ENCODE measurements at regions of chr12 and their contacts with region 1.

Region 1: DNA sequence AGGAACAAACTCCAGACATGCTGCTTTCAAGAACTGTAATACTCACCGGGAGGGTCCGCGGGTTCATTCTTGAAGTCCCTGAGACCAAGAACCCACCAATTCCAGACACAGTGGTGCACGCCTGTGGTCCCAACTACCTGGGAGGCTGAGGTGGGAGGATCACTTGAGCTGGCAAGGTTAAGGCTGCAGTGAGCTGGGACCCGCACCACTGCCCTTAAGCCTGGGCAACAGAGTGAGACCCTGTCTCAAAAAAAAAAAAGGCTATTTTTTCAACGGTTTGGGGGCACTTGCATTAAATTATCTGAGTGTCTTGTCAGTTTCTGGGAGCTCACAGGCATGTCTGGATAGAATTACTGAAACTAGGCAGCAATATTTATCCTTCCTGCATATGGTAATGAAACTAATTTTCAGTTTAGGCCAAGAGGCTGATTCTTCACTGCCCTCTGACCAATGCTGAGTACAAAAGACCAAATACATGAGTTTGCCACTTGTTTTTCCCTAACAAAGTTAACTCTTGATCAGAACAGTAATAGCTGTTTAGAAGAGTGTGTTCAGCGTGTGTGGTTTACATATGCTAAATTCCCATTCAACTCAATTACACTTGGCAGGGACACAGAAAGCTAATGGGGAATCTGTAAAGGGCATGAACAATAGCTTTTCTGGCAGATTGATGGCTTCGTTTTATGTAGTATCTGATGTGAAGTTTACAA is 65.8 kb upstream of the RASSF3 start:
- DNase-seq: no peak
- H3K4me3 ChIP-seq: no peak overlapping the region
- CTCF ChIP-seq: no peak

Region 2: DNA sequence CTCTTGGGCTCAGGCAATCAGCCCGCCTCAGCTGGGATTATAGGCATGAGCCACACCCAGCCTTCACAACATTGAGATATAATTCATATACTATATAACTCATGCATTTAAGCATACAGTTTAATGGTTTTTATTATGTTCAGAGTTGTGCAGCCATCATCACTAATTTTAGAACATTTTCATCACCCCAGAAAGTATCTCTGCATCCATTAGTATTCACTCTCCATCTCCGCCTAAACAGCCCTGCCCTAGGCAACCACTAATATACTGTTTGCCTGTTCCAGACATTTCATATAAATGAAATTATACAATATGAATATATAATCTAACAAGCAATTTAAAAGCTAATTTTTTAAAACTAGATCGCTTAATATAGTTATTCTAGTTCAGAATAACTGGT is 57.9 kb before region 1 on chr12:
- in situ Hi-C with region 1: loop called (anchors 5 kb)
- DNase-seq: no peak
- H3K4me3 ChIP-seq: no peak overlapping the region
- CTCF ChIP-seq: no peak

Region 3: DNA sequence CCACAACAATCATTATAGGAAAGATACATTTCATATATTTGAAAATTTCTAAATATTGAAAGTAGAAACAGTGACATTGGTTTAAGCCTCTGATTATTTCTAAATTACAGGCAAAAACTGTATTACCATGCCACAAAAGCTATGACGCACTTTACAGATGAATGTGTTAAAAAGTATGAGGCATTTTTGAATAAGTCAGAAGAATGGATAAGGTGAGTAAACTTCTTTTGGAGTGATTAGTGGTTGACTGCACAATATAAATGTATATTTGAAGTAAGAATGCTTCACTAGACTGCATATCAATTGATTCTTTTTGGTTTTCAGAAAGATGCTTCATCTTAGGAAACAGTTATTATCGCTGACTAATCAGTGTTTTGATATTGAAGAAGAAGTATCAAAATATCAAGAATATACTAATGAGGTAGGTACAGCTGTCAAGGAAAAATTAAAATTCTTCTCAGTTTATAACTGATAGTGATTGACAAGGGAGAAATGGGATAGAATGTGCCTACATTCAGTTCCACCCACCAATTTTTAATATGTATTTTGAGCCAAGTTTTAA is 47.6 kb before region 1 on chr12:
- in situ Hi-C with region 1: no loop called
- DNase-seq: no peak
- H3K4me3 ChIP-seq: no peak overlapping the region
- CTCF ChIP-seq: no peak

Region 4: DNA sequence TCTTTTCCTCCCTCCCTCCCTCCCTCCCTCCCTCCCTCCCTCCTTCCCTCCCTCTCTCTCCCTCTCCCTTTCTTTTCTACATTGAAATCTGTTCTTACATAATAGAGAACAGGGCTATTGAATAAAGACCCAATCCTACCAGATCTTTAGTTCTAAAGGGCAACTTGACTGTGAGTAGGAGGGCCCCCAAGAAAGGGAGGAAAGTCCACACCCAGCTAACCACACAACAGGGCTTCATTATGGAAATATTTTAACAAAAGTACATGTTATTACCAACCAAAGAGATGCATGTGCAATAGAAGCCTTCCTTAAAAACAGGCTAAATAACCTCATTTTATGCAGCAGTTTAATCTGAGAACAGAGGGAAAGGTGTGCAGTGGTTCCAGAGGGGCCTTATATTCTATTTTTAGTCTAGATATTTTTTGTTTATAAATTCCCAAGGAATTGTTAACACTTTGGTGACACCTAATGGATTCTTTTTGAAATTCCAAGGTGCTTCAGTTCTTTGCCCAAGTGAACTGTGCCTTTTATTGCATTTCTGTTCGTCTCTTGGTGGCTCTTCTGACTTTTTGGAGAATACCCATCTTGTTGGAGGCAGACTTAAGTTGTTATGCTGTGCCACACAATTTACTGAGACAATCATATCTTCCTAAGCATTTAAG is 151.7 kb after region 1 on chr12:
- in situ Hi-C with region 1: loop called (anchors 5 kb)
- DNase-seq: no peak
- H3K4me3 ChIP-seq: no peak overlapping the region
- CTCF ChIP-seq: peak; percentile 35

Region 5: GRCh38 chr12:64744422-64745258 is 200.1 kb after region 1 on chr12:
- in situ Hi-C with region 1: no loop called
- DNase-seq: no peak
- H3K4me3 ChIP-seq: no peak overlapping the region
- CTCF ChIP-seq: no peak

Measured in astrocyte of the cerebellum (primary cell).